GM13977 (cell line): ENCODE measurements at regions of chr6 and their contacts with region 1.

Region 1: GRCh38 chr6:105484238-105485161 is 81.6 kb upstream of the PREP start:
- DNase-seq: no peak
- CTCF ChIP-seq: peak; percentile 80

Region 2: GRCh38 chr6:105926318-105926717 is 441.8 kb after region 1 on chr6:
- in situ Hi-C with region 1: no loop called
- DNase-seq: no peak
- CTCF ChIP-seq: no peak

Region 3: GRCh38 chr6:106085984-106086813 is 601.7 kb after region 1 on chr6 and contains the start of gene PRDM1:
- in situ Hi-C with region 1: loop called (anchors 25 kb)
- DNase-seq: peak; percentile 80
- CTCF ChIP-seq: peak; percentile 23

Region 4: DNA sequence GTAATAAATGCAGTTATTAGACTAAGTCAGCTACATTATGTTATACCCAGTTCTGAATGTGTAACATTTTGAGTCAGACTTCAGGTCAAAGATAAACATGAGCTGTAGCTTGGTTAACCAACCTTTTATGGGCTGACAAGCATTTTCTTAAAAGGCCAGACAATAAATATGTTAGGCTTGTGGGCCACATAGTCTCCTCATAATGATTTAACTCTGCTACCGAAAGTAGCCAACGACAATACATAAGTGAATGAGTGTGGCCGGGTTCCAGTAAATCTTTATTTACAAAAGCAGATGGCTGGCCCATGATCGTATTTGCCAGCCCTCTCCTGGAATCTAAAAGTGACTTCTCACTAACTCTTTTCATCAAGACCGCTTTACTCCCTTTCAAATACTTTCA is 791.2 kb after region 1 on chr6:
- in situ Hi-C with region 1: loop called (anchors 25 kb)
- DNase-seq: peak; percentile 30
- CTCF ChIP-seq: no peak